ENCODE measurements at regions of chr6 and their contacts with region 1.

Region 1: DNA sequence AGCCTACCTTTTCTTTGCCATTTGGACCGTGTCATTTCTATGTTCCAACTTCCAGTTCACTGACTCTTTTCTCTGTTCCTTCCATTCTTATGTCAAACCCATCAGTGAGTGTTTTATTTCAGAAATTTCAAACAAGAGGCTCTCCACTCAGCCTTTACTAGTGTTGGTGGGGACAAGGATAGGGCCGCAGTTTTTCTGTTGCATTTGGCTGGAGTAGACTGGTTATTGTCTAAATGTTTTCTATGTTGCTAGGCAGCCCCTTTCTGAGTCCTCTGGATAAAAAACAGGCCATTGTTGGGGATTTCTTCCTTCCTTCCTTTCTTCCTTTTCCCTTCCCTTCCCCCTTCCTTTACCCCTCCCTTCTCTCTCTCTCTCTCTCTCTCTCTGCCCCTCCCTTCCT is 288.6 kb downstream of the PRKN start:
- DNase-seq: no peak
- H3K4me3 ChIP-seq: no peak overlapping the region
- H3K27ac ChIP-seq: no peak overlapping the region
- H3K4me1 ChIP-seq: no peaks in the 10 kb centered on the region
- H3K27me3 ChIP-seq: no peaks in the 10 kb centered on the region
- CTCF ChIP-seq: no peak
- POLR2A ChIP-seq: no peak

Region 2: GRCh38 chr6:162459985-162460384 is 21.0 kb after region 1 on chr6:
- CTCF ChIA-PET with region 1: no interaction called
- POLR2A ChIA-PET with region 1: no interaction called
- dilution Hi-C with region 1: no loop called
- intact Hi-C with region 1: loop called (anchors 2 kb)
- DNase-seq: no peak
- H3K4me3 ChIP-seq: no peak overlapping the region
- H3K27ac ChIP-seq: no peak overlapping the region
- H3K4me1 ChIP-seq: no peaks in the 10 kb centered on the region
- H3K27me3 ChIP-seq: no peaks in the 10 kb centered on the region
- CTCF ChIP-seq: no peak
- POLR2A ChIP-seq: no peak

Region 3: DNA sequence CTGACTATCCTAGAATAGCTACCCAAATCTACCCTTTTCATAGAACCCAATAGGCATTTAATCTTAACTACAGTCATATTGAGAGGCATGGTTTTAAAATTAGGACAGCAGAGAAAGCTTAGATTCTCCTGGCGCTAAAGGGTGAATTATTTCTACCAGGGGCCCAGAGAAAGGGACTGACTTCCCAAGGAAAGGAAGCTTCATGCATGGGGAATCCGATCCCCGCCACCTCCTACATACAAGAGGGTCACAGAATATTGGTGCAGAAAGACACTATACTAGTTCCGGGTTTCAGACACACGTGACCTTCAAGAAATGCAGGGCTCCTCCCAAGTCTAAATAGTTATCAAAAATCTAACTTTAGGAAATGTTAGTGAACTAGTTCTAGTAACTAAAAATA is 157.7 kb after region 1 on chr6:
- CTCF ChIA-PET with region 1: no interaction called
- POLR2A ChIA-PET with region 1: no interaction called
- dilution Hi-C with region 1: no loop called
- intact Hi-C with region 1: no loop called
- DNase-seq: no peak
- H3K4me3 ChIP-seq: no peak overlapping the region
- H3K27ac ChIP-seq: no peak overlapping the region
- H3K4me1 ChIP-seq: no peaks in the 10 kb centered on the region
- H3K27me3 ChIP-seq: no peaks in the 10 kb centered on the region
- CTCF ChIP-seq: no peak
- POLR2A ChIP-seq: no peak

Measured in endothelial cell of umbilical vein (primary cell).